Activated naive CD8-positive, alpha-beta T cell treated with anti-CD3 and anti-CD28 coated beads, Interleukin-2, amount 10 ng/mL, durations not matched to agents 7 days and 5 days (primary cell): ENCODE measurements at regions of chr11 and their contacts with region 1.

Region 1: GRCh38 chr11:65859200-65859811 is 927 bp upstream of the MUS81 start:
- DNase-seq: peak; percentile 97
- ATAC-seq: peak; percentile 72
- H3K4me3 Mint-ChIP-seq: peak overlapping the region; percentile 91
- H3K27ac Mint-ChIP-seq: peak overlapping the region; percentile 98
- H3K4me1 Mint-ChIP-seq: peaks cover 37% of the 10 kb centered on the region
- H3K27me3 Mint-ChIP-seq: no peaks in the 10 kb centered on the region

Region 2: DNA sequence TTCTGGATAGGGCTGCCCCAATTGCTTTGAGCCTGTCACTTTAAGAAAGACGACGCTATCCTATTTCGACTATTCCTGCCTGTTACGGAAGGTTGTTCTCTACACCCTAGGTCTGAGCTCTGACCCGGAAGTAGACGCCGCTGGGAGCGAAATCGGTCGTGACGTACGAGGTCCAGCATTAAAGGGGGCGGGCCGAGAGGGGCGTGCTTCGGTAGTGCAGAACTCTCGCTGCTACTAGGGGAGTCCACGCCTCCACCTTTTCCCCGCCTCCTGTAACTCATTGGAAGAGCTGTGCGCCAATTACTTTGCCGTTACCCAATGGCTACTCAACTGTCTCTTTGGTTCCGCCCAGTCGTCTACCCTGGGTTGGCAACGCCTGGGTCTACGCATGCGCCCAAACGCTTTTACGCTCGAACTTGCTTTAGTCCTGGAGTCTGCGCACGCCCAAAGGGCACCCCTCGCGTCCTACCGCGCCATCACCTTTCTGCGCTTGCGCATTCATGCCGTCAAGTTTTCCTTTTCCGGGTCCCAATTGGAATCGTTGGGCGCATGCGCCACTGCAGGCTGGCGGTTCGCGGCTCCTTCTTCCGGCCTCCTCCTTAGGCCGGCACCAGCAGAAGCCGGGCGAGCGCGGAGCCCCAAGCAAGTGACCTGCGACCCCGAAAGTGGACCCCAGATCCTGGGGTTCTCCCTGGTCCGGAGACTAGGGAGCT is 243.9 kb before region 1 on chr11 and contains the start of gene PCNX3:
- POLR2A ChIA-PET with region 1: interaction called, 12 read pairs
- DNase-seq: peak; percentile 97
- ATAC-seq: peak; percentile 85
- H3K4me3 Mint-ChIP-seq: peak within 1 kb of the TSS; percentile 97
- H3K27ac Mint-ChIP-seq: peak within 1 kb of the TSS; percentile 96
- H3K4me1 Mint-ChIP-seq: peaks cover 22% of the 10 kb centered on the region
- H3K27me3 Mint-ChIP-seq: no peaks in the 10 kb centered on the region
- total RNA-seq, gene PCNX3: 57.2 to 60.2 TPM

Region 3: GRCh38 chr11:65720237-65720934 is 138.9 kb before region 1 on chr11 and contains the start of gene RNASEH2C:
- POLR2A ChIA-PET with region 1: interaction called, 20 read pairs
- DNase-seq: peak; percentile 86
- ATAC-seq: peak; percentile 91
- H3K4me3 Mint-ChIP-seq: peak within 1 kb of the TSS; percentile 95
- H3K27ac Mint-ChIP-seq: peak within 1 kb of the TSS; percentile 89
- H3K4me1 Mint-ChIP-seq: peaks cover 14% of the 10 kb centered on the region
- H3K27me3 Mint-ChIP-seq: peaks cover 2% of the 10 kb centered on the region
- total RNA-seq, gene RNASEH2C: 74.8 to 84.2 TPM

Region 4: GRCh38 chr11:65764434-65764833 is 94.9 kb before region 1 on chr11:
- POLR2A ChIA-PET with region 1: no interaction called
- DNase-seq: no peak
- ATAC-seq: no peak
- H3K4me3 Mint-ChIP-seq: no peak overlapping the region
- H3K27ac Mint-ChIP-seq: no peak overlapping the region
- H3K4me1 Mint-ChIP-seq: no peaks in the 10 kb centered on the region
- H3K27me3 Mint-ChIP-seq: peaks cover 21% of the 10 kb centered on the region

Region 5: DNA sequence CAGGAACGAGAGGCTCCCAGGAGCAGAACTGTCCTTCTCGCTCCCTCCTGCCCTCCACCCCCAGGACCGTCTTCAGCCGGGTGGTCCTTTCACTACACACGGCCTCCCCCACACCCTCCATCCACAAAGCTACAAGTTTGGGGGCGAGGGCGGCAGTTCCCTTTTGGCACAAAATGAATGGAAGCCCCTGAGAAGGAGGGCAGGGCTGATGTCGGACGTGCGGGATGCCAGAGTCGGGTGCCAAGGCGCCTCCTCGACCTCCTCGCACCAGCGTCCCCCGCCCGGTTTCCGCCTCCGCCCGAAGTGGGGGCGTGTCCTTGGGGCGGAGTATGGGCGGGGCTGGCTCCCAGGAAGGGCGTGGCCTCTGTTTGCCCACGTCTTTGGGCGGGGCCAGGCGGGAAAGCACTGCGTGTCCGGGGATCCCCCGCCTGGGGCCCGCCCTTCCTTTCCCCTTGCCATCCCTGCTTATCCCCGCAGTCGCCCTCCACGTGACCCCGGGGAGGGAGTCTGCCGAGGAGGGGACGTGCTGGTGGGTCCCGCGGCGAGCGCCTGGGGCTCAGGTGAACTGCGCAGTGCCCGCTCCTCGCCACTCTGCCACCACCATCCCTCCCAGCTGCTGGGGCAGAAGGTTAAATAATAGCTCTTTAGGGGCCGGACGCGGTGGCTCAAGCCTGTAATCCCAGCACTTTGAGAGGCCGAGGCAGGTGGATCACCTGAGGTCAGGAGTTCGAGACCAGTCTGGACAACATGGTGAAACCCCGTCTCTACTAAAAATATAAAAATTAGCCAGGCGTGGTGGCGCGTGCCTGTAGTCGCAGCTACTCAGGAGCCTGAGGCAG is 14.2 kb after region 1 on chr11:
- POLR2A ChIA-PET with region 1: interaction called, 176 read pairs
- DNase-seq: peak; percentile 100
- ATAC-seq: peak; percentile 85
- H3K4me3 Mint-ChIP-seq: peak overlapping the region; percentile 77
- H3K27ac Mint-ChIP-seq: peak overlapping the region; percentile 77
- H3K4me1 Mint-ChIP-seq: peaks cover 33% of the 10 kb centered on the region
- H3K27me3 Mint-ChIP-seq: no peaks in the 10 kb centered on the region

Region 6: DNA sequence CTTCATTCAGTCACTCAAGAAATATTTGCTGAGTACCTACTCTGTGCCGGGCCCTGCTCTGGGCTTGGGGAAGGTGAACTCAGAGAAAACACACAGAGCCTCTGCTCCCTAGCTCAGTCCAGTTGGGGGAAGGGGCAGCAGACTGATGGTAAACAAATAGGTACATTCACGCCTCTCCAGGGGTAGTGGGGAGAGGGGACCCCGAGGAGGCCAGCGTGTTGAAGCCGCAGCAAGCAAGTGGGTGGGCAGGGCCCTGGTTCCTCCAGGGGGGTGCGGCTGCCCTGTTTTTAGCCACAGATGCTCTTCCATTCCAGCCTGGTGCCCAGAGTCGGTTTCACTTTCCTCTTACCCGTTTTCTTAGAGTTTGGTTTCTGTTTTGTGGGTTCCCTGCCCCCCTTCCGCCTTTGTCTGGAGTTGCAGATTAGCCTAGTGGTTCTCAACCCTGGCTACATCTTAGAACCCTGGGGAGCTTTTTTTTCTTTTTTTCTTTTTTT is 68.6 kb after region 1 on chr11:
- POLR2A ChIA-PET with region 1: interaction called, 12 read pairs
- DNase-seq: peak; percentile 76
- ATAC-seq: peak; percentile 85
- H3K4me3 Mint-ChIP-seq: peak overlapping the region; percentile 81
- H3K27ac Mint-ChIP-seq: peak overlapping the region; percentile 93
- H3K4me1 Mint-ChIP-seq: peaks cover 51% of the 10 kb centered on the region
- H3K27me3 Mint-ChIP-seq: no peaks in the 10 kb centered on the region